Activated T-helper 2 cell treated with anti-CD3 and anti-CD28 coated beads, Interferon-gamma antibody, Interleukin-2, Interleukin-4, amounts not matched to agents 10 μg/mL and 5 μg/mL and 100 μg/mL, durations not matched to agents 14 hours and 24 hours and 36 hours (primary cell): ENCODE measurements at regions of chr11 and their contacts with region 1.

Region 1: GRCh38 chr11:67606492-67607201 is at the start of gene NDUFV1:
- DNase-seq: peak; percentile 95
- H3K4me3 Mint-ChIP-seq: peak within 1 kb of the TSS; percentile 88
- H3K27ac Mint-ChIP-seq: peak within 1 kb of the TSS; percentile 90
- H3K4me1 Mint-ChIP-seq: peaks cover 10% of the 10 kb centered on the region
- H3K27me3 Mint-ChIP-seq: peaks cover 9% of the 10 kb centered on the region
- total RNA-seq, gene NDUFV1: 237 and 242 TPM in 2 replicates

Region 2: DNA sequence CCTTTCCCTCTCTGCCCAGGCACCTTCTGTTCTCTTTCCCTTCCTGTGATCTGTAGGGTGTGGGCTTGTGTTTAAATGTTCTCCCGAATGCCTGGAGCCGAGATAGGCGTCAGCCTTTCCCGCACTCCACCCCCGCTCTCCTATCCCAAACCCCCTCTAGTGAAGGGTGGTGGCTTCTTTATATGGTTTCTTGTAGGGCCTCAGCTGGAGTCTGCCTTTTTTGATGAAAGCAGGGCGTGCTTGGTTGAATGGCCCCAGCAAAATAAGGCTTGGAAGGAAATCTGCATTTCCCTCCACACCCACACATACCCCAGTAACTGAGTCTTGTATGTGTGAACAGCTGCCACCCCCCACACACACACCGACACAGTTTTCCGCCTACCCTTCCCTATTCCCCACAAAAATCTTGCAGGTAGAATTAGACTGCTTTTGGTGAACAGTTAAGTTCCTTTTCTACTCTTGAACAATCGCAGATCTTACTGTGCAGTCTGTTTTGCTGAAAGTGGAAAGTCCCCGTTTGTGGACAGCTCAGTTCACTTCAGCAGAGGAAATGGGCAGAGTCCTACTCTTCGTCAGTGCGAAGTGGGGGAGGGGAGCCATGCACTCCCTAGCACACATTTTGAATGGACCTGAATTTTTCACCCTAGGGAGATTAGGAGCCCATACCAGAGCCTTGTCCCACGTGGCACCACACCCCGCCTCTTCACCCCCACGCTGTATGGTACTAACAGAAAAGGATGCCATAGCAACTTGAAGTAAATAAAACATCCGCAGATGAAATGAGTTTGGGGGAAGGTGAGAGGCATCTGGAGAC is 365.9 kb before region 1 on chr11:
- intact Hi-C with region 1: no loop called
- DNase-seq: peak; percentile 78
- H3K4me3 Mint-ChIP-seq: peak overlapping the region; percentile 99
- H3K27ac Mint-ChIP-seq: peak overlapping the region; percentile 99
- H3K4me1 Mint-ChIP-seq: peaks cover 30% of the 10 kb centered on the region
- H3K27me3 Mint-ChIP-seq: no peaks in the 10 kb centered on the region

Region 3: GRCh38 chr11:67373925-67374618 is 232.6 kb before region 1 on chr11:
- intact Hi-C with region 1: no loop called
- DNase-seq: no peak
- H3K4me3 Mint-ChIP-seq: peak overlapping the region; percentile 89
- H3K27ac Mint-ChIP-seq: peak overlapping the region; percentile 85
- H3K4me1 Mint-ChIP-seq: peaks cover 31% of the 10 kb centered on the region
- H3K27me3 Mint-ChIP-seq: peaks cover 54% of the 10 kb centered on the region

Region 4: DNA sequence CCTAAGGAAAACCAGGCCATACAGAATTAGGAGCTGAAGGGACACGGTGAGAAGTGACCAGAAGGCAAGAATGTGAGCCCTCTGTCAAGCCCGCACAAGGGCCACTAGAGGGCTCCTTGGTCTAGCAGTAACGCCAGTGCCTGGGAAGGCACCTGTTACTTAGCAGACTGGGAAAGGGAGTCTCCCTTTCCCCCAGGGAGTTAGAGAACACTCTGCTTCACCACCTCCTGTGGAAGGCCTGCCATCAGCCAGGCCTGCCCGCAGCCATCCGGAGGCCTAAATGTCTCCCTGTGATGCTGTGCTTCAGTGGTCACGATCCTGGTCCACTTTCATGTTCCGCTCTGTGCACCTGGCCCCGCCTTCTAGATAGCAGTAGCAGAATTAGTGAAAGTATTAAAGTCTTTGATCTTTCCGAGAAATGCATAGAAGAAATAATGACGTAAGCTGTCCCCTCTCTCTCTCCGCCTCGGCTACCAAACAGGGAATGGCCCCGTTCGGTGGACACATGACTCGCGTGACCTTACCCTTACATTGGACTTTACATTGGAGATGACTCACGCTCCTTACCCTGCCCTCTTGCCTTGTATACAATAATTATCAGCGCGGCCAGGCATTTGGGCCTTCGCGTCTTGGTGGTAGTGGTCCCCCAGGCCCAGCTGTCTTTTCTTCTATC is 33.8 kb before region 1 on chr11:
- intact Hi-C with region 1: loop called (anchors 5 kb)
- DNase-seq: no peak
- H3K4me3 Mint-ChIP-seq: no peak overlapping the region
- H3K27ac Mint-ChIP-seq: no peak overlapping the region
- H3K4me1 Mint-ChIP-seq: no peaks in the 10 kb centered on the region
- H3K27me3 Mint-ChIP-seq: peaks cover 14% of the 10 kb centered on the region

Region 5: GRCh38 chr11:67583247-67584204 is 23.1 kb before region 1 on chr11 and contains the start of gene GSTP1:
- intact Hi-C with region 1: loop called (anchors 2 kb)
- DNase-seq: peak; percentile 69
- H3K4me3 Mint-ChIP-seq: peak within 1 kb of the TSS; percentile 95
- H3K27ac Mint-ChIP-seq: peak within 1 kb of the TSS; percentile 88
- H3K4me1 Mint-ChIP-seq: peaks cover 30% of the 10 kb centered on the region
- H3K27me3 Mint-ChIP-seq: peaks cover 19% of the 10 kb centered on the region
- total RNA-seq, gene GSTP1: 339 and 344 TPM in 2 replicates

Region 6: GRCh38 chr11:67630228-67630942 is 23.7 kb after region 1 on chr11:
- intact Hi-C with region 1: loop called (anchors 2 kb)
- DNase-seq: peak; percentile 95
- H3K4me3 Mint-ChIP-seq: peak overlapping the region; percentile 85
- H3K27ac Mint-ChIP-seq: peak overlapping the region; percentile 93
- H3K4me1 Mint-ChIP-seq: peaks cover 9% of the 10 kb centered on the region
- H3K27me3 Mint-ChIP-seq: no peaks in the 10 kb centered on the region